CD8-positive, alpha-beta memory T cell (primary cell): ENCODE measurements at regions of chr1 and their contacts with region 1.

Region 1: GRCh38 chr1:109090196-109091077 is at the start of gene TMEM167B:
- DNase-seq: peak; percentile 75 to 93 (median 83)
- H3K4me3 ChIP-seq: peak within 1 kb of the TSS; percentile 75
- H3K4me3 Mint-ChIP-seq: peak within 1 kb of the TSS; percentile 92 to 99 (median 95)
- H3K27ac ChIP-seq: peak within 1 kb of the TSS; percentile 92
- H3K27ac Mint-ChIP-seq: peak within 1 kb of the TSS; percentile 94 to 99 (median 96)
- H3K4me1 ChIP-seq: peaks cover 22% of the 10 kb centered on the region
- H3K4me1 Mint-ChIP-seq: peaks cover 32 to 50% (median 43%) of the 10 kb centered on the region in 3 donors
- H3K27me3 ChIP-seq: no peaks in the 10 kb centered on the region
- H3K27me3 Mint-ChIP-seq: peaks cover 0 to 3% of the 10 kb centered on the region in 2 donors
- total RNA-seq, gene TMEM167B: 30.3 to 36.6 TPM

Region 2: DNA sequence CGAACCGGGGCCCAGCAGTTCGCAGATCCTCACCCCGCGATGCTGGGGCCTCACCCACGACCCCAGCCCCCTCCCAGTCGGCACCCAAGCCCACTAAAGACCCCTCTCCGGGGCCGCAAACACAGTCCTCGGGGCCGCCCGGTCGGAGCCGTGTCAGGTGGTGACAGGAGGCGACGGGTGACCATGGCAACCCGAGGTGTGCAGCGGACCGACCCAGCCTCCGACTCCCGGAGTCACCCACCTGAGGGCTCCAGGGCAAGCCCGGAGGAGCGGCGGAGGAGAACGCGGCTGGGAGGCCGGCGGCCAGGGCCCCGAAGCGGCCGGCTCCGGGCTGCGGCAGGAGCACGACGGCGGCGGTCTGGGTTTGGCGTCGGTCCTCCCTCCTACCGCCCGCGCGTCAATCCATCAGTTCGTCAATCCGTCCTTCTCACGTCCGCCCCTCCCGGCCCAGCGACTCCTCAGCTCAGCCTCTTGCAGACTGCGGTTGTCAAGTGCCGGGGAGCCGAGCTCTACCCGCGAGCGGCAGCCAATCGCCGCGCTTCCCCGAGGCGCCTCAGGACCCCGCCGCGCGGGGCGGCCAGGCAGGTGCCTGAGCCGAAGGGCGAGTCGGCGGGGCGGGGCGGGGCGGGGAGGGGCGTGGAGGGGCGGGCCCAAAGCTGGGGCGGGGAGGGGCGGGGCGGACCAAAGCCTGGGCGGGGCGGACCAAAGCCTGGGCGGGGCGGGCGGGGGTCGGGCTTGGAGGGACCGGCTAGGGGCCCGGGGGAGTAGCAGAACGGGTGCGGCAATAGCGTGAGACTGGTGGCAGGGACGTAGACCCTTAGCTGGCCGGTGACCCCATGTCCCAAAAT is 48.6 kb before region 1 on chr1 and contains the start of gene WDR47:
- CTCF ChIA-PET with region 1: interaction called, 3 read pairs
- POLR2A ChIA-PET with region 1: interaction called, 11 read pairs
- DNase-seq: peak; percentile 93 to 98 (median 96)
- H3K4me3 ChIP-seq: peak within 1 kb of the TSS; percentile 79
- H3K4me3 Mint-ChIP-seq: peak within 1 kb of the TSS; percentile 89 to 98 (median 92)
- H3K27ac ChIP-seq: peak within 1 kb of the TSS; percentile 87
- H3K27ac Mint-ChIP-seq: peak within 1 kb of the TSS; percentile 79 to 99 (median 92)
- H3K4me1 ChIP-seq: no peaks in the 10 kb centered on the region
- H3K4me1 Mint-ChIP-seq: peaks cover 16 to 24% (median 16%) of the 10 kb centered on the region in 3 donors
- H3K27me3 ChIP-seq: no peaks in the 10 kb centered on the region
- H3K27me3 Mint-ChIP-seq: no peaks in the 10 kb centered on the region
- total RNA-seq, gene WDR47: 14.4 to 15.1 TPM

Region 3: GRCh38 chr1:109061183-109061582 is 29.3 kb before region 1 on chr1:
- CTCF ChIA-PET with region 1: no interaction called
- POLR2A ChIA-PET with region 1: no interaction called
- DNase-seq: no peak
- H3K4me3 ChIP-seq: no peak overlapping the region
- H3K4me3 Mint-ChIP-seq: no peak overlapping the region
- H3K27ac ChIP-seq: no peak overlapping the region
- H3K27ac Mint-ChIP-seq: no peak overlapping the region
- H3K4me1 ChIP-seq: no peaks in the 10 kb centered on the region
- H3K4me1 Mint-ChIP-seq: no peaks in the 10 kb centered on the region
- H3K27me3 ChIP-seq: no peaks in the 10 kb centered on the region
- H3K27me3 Mint-ChIP-seq: no peaks in the 10 kb centered on the region

Region 4: GRCh38 chr1:109075531-109076490 is 14.6 kb before region 1 on chr1 and contains the start of gene TAF13:
- CTCF ChIA-PET with region 1: interaction called, 6 read pairs
- POLR2A ChIA-PET with region 1: interaction called, 12 read pairs
- DNase-seq: peak; percentile 81 to 92 (median 84)
- H3K4me3 ChIP-seq: peak within 1 kb of the TSS; percentile 90
- H3K4me3 Mint-ChIP-seq: peak within 1 kb of the TSS; percentile 92 to 100 (median 99)
- H3K27ac ChIP-seq: peak within 1 kb of the TSS; percentile 87
- H3K27ac Mint-ChIP-seq: peak within 1 kb of the TSS; percentile 97 to 100 (median 99)
- H3K4me1 ChIP-seq: peaks cover 15% of the 10 kb centered on the region
- H3K4me1 Mint-ChIP-seq: peaks cover 22 to 31% (median 23%) of the 10 kb centered on the region in 3 donors
- H3K27me3 ChIP-seq: no peaks in the 10 kb centered on the region
- H3K27me3 Mint-ChIP-seq: no peaks in the 10 kb centered on the region
- total RNA-seq, gene TAF13: 37.5 to 40.9 TPM

Region 5: GRCh38 chr1:109133002-109133711 is 42.7 kb after region 1 on chr1:
- CTCF ChIA-PET with region 1: no interaction called
- POLR2A ChIA-PET with region 1: no interaction called
- DNase-seq: no peak
- H3K4me3 ChIP-seq: no peak overlapping the region
- H3K4me3 Mint-ChIP-seq: no peak overlapping the region
- H3K27ac ChIP-seq: no peak overlapping the region
- H3K27ac Mint-ChIP-seq: peak overlapping the region in 2 of 8 donors; percentile 12 to 15
- H3K4me1 ChIP-seq: no peaks in the 10 kb centered on the region
- H3K4me1 Mint-ChIP-seq: no peaks in the 10 kb centered on the region
- H3K27me3 ChIP-seq: no peaks in the 10 kb centered on the region
- H3K27me3 Mint-ChIP-seq: no peaks in the 10 kb centered on the region

Region 6: GRCh38 chr1:109298666-109299557 is 208.5 kb after region 1 on chr1:
- CTCF ChIA-PET with region 1: no interaction called
- POLR2A ChIA-PET with region 1: no interaction called
- DNase-seq: no peak
- H3K4me3 ChIP-seq: no peak overlapping the region
- H3K4me3 Mint-ChIP-seq: no peak overlapping the region
- H3K27ac ChIP-seq: no peak overlapping the region
- H3K27ac Mint-ChIP-seq: peak overlapping the region in 1 of 8 donors; percentile 54
- H3K4me1 ChIP-seq: no peaks in the 10 kb centered on the region
- H3K4me1 Mint-ChIP-seq: no peaks in the 10 kb centered on the region
- H3K27me3 ChIP-seq: no peaks in the 10 kb centered on the region
- H3K27me3 Mint-ChIP-seq: peaks cover 23 to 35% of the 10 kb centered on the region in 2 donors